Caki2 (cell line): ENCODE measurements at regions of chr3 and their contacts with region 1.

Region 1: DNA sequence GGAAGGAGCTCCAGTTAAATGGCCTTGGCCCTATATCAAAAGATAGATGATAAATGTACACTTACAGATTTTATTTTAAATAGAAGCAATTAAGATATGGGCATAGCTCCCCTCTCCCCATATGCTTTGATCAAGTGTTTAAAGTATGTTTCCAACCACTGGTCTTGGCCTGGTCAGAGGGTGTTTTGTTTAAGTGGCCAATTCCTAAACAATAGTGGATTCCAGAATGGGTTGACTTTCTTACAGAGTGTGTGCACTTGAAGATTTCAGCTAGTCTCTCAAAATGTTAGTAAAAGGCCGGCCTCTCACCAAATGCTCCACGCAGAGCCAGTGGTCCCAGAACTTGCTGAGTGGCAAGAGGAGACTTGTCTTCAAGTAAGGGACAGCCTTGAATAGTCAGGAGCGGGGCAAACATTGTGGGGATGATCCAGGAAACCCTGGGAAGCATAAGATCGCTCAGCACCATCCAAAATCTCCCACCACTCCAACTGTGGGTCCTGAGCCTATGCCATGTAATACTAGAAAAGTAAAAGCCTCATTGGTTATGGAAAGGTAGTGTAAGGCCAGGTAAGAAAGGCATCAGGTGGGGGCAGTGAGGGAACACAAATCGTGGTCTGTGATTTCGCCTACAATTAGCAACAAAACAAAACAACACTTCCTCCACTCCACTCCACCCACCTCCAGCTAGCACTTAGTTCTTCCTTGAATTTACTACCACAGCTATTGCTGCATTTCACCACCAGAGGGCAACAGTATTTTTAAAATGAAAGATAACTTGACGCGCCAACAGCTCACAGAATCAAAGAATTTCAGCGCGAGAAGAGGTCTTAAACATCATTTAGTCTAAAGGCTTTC is 4.8 kb downstream of the RARRES1 start:
- DNase-seq: peak; percentile 73

Region 2: DNA sequence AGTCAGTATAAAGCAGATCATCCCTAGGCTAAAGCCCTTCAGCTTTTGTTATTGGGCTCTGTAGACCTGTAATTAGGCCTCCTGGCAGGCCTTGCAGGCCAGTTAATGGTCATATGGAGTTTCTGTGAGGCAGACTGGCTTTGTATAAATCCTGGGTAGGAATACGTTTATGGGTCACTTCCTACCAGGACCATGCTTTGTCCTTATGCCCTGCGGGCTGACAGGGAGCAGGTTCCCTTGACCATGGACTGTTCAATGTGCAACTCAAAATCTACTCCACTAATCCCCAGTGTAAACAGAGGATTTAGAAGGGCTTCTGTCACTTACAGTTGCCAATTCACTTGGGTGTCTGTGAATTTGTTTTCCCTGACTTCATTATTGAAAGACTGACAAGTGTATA is 359.2 kb before region 1 on chr3:
- in situ Hi-C with region 1: no loop called
- DNase-seq: no peak

Region 3: GRCh38 chr3:158659454-158660237 is 67.8 kb before region 1 on chr3:
- in situ Hi-C with region 1: loop called (anchors 10 kb)
- DNase-seq: peak; percentile 69